MCF 10A (cell line): ENCODE measurements at regions of chr20 and their contacts with region 1.

Region 1: GRCh38 chr20:13819885-13820645 is 35.2 kb downstream of the NDUFAF5 start:
- DNase-seq: peak; percentile 70
- H3K4me3 Mint-ChIP-seq: no peak overlapping the region
- H3K27ac Mint-ChIP-seq: no peak overlapping the region
- H3K4me1 Mint-ChIP-seq: no peaks in the 10 kb centered on the region
- H3K27me3 Mint-ChIP-seq: no peaks in the 10 kb centered on the region
- CTCF ChIP-seq: peak; percentile 46

Region 2: GRCh38 chr20:13736436-13737191 is 83.5 kb before region 1 on chr20:
- CTCF ChIA-PET with region 1: no interaction called
- POLR2A ChIA-PET with region 1: no interaction called
- intact Hi-C with region 1: no loop called
- DNase-seq: no peak
- H3K4me3 Mint-ChIP-seq: no peak overlapping the region
- H3K27ac Mint-ChIP-seq: peak overlapping the region; percentile 55
- H3K4me1 Mint-ChIP-seq: no peaks in the 10 kb centered on the region
- H3K27me3 Mint-ChIP-seq: no peaks in the 10 kb centered on the region
- CTCF ChIP-seq: no peak

Region 3: GRCh38 chr20:13791540-13792459 is 28.3 kb before region 1 on chr20:
- CTCF ChIA-PET with region 1: interaction called, 17 read pairs
- POLR2A ChIA-PET with region 1: interaction called, 4 read pairs
- intact Hi-C with region 1: no loop called
- DNase-seq: no peak
- H3K4me3 Mint-ChIP-seq: no peak overlapping the region
- H3K27ac Mint-ChIP-seq: peak overlapping the region; percentile 1
- H3K4me1 Mint-ChIP-seq: peaks cover 20% of the 10 kb centered on the region
- H3K27me3 Mint-ChIP-seq: no peaks in the 10 kb centered on the region
- CTCF ChIP-seq: no peak

Region 4: GRCh38 chr20:13809373-13809772 is 10.7 kb before region 1 on chr20:
- CTCF ChIA-PET with region 1: interaction called, 100 read pairs
- POLR2A ChIA-PET with region 1: interaction called, 15 read pairs
- intact Hi-C with region 1: no loop called
- DNase-seq: no peak
- H3K4me3 Mint-ChIP-seq: no peak overlapping the region
- H3K27ac Mint-ChIP-seq: no peak overlapping the region
- H3K4me1 Mint-ChIP-seq: no peaks in the 10 kb centered on the region
- H3K27me3 Mint-ChIP-seq: no peaks in the 10 kb centered on the region
- CTCF ChIP-seq: no peak

Region 5: DNA sequence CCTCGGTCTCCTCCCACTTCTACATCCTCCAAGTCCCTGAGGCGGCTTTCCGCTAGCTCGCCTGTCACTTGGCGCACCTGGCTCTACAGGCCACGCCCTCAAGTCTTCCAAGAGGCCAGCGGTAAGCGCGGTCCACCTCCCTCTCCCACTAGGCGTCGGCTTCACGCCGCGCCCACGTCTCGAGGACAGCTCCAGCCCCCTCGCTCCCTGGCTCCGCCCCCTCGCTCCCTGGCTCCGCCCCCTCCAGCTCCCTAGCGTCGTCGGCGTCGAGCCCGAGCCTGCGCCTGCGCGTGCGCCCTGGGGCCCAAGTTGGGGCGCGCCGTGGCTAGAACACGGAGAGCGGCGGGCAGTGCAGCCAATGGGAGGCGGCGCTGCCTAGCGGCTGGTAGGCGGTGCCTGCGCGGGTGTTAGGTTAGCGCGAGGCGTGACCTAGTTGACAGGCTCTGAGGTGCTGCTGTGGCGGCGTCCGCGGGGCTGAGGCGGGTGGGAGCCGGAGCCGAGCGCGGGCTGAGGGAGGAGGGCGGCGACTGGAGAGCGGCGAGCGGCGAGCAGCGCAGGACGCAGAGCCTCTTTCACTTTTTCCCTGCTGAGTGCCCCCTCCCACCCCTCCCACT is 175.1 kb after region 1 on chr20 and contains the start of gene MACROD2:
- CTCF ChIA-PET with region 1: interaction called, 5 read pairs
- POLR2A ChIA-PET with region 1: interaction called, 11 read pairs
- intact Hi-C with region 1: no loop called
- DNase-seq: peak; percentile 97
- H3K4me3 Mint-ChIP-seq: peak within 1 kb of the TSS; percentile 95
- H3K27ac Mint-ChIP-seq: peak within 1 kb of the TSS; percentile 39
- H3K4me1 Mint-ChIP-seq: peaks cover 9% of the 10 kb centered on the region
- H3K27me3 Mint-ChIP-seq: no peaks in the 10 kb centered on the region
- CTCF ChIP-seq: no peak
- total RNA-seq, gene MACROD2: 2.3 and 3.1 TPM in 2 replicates

Region 6: DNA sequence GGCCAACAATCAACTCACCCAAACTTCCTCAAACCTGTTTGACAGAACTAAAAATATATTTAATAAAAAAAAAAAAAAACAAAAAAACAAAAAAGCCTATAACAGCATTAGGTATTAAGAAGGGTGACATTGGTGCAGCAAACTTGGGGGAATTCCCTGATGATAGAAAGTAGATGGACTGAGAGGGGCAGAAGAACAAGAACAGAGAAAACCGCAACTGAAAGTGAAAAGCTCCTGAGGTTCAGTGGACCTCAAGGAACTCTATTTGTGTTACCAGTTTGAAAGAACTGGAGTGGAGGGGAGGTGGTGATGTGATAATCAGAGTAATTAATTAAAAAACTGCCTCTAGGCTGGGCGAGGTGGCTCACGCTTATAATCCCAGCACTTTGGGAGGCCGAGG is 229.0 kb after region 1 on chr20:
- CTCF ChIA-PET with region 1: interaction called, 154 read pairs
- POLR2A ChIA-PET with region 1: interaction called, 28 read pairs
- intact Hi-C with region 1: no loop called
- DNase-seq: no peak
- H3K4me3 Mint-ChIP-seq: no peak overlapping the region
- H3K27ac Mint-ChIP-seq: no peak overlapping the region
- H3K4me1 Mint-ChIP-seq: no peaks in the 10 kb centered on the region
- H3K27me3 Mint-ChIP-seq: no peaks in the 10 kb centered on the region
- CTCF ChIP-seq: no peak

Region 7: DNA sequence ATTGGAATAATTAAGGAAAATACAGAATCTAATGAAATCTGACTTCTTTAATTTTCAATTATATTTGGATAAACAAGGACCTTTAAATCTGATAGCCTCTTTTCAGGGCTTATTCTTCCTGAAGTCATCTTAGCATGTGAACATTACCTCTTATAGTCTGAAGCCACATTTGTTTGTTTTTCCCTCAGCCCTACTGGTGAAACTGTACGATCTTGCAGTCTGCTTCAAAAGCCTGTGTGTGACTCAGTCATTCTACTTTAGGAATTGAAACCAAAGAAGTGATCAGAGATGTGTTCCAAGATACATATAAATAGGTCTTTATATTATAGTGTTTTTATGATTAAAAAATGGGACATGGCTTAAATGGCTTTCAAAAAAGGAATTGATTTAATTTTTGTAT is 242.7 kb after region 1 on chr20:
- CTCF ChIA-PET with region 1: interaction called, 36 read pairs
- POLR2A ChIA-PET with region 1: interaction called, 4 read pairs
- intact Hi-C with region 1: no loop called
- DNase-seq: peak; percentile 2
- H3K4me3 Mint-ChIP-seq: no peak overlapping the region
- H3K27ac Mint-ChIP-seq: no peak overlapping the region
- H3K4me1 Mint-ChIP-seq: no peaks in the 10 kb centered on the region
- H3K27me3 Mint-ChIP-seq: no peaks in the 10 kb centered on the region
- CTCF ChIP-seq: no peak

Region 8: DNA sequence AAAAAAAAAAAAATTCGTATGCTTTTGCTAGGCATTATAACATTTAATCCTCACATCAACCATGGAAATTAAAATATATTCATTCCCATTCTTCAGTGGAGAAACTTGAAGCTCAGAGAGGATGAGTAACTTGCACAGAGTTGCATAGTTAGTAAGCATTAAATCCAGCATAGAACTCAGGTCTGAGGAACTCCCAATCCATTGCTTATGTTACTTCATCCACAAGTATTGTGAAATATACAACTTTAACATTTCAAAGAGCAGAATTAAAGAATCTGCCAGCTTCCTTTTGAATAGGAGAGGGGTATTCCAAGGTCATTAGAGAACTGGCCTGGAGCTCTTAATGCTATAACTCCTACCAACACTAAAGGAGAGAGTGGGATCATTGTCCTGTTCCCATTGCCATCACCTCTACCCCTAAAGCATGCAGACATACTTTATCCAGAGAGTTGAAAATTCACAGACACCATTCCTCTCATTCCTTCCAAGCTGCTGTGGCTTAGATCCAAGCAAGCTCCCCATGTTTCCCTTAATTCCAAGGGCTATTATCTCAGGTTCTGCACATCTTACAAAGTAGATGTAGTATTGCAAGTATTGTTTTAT is 425.4 kb after region 1 on chr20:
- CTCF ChIA-PET with region 1: no interaction called
- POLR2A ChIA-PET with region 1: no interaction called
- intact Hi-C with region 1: no loop called
- DNase-seq: no peak
- H3K4me3 Mint-ChIP-seq: no peak overlapping the region
- H3K27ac Mint-ChIP-seq: no peak overlapping the region
- H3K4me1 Mint-ChIP-seq: no peaks in the 10 kb centered on the region
- H3K27me3 Mint-ChIP-seq: no peaks in the 10 kb centered on the region
- CTCF ChIP-seq: no peak